ENCODE measurements at regions of chr3 and their contacts with region 1.

Region 1: DNA sequence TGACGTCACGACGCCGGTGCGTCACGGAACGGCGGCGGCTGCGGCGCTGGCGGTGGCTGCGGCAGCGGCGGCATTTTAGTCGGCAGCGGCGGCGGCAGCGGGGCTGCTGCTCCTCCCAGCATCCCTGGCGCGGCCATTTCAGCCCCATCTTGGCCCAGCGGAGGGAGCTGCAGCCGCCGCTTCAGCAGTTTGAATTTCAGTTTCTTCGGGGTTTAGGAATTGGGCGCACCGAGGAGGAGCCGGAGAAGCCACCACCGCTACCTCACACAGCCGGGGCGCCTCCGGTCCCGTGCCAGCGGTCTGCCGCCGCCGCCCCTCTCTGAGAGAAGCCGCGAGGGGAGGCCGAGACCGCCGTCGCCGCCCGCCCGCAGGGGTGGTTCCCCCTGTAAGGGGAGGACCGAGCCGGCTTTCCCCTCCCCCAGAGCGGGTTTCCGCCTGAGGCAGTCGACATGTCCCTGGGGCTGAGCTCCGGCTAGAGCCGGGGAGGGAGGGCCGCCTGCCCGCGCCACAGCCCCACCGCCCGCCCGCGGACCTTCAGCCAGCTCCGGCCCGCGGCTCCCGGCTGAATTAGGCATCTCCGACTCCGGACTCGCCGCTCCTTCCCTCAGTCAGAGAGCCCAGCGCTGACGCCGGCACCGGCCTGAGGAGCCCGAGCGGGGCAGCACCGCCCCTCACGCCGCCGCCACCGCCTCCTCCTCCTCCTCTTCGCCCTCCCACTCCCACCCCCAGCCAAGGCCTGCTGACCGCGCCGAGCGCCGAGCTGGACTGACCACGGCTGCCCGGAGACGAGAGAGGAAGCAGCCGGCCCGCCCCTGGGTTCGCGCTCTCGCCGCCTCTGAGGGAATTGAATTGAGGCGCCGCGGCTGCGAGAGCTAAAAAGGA is at the start of gene TSC22D2:
- DNase-seq: peak; percentile 96
- H3K4me3 Mint-ChIP-seq: peak within 1 kb of the TSS; percentile 77
- H3K27ac Mint-ChIP-seq: peak within 1 kb of the TSS; percentile 99
- H3K4me1 Mint-ChIP-seq: peaks cover 23% of the 10 kb centered on the region
- H3K27me3 Mint-ChIP-seq: no peaks in the 10 kb centered on the region
- total RNA-seq, gene TSC22D2: 13.0 to 13.7 TPM

Region 2: GRCh38 chr3:150227839-150228238 is 180.6 kb before region 1 on chr3:
- CTCF ChIA-PET with region 1: interaction called, 3 read pairs
- intact Hi-C with region 1: loop called (anchors 1 kb)
- DNase-seq: peak; percentile 72
- H3K4me3 Mint-ChIP-seq: no peak overlapping the region
- H3K27ac Mint-ChIP-seq: no peak overlapping the region
- H3K4me1 Mint-ChIP-seq: no peaks in the 10 kb centered on the region
- H3K27me3 Mint-ChIP-seq: peaks cover 12% of the 10 kb centered on the region

Region 3: DNA sequence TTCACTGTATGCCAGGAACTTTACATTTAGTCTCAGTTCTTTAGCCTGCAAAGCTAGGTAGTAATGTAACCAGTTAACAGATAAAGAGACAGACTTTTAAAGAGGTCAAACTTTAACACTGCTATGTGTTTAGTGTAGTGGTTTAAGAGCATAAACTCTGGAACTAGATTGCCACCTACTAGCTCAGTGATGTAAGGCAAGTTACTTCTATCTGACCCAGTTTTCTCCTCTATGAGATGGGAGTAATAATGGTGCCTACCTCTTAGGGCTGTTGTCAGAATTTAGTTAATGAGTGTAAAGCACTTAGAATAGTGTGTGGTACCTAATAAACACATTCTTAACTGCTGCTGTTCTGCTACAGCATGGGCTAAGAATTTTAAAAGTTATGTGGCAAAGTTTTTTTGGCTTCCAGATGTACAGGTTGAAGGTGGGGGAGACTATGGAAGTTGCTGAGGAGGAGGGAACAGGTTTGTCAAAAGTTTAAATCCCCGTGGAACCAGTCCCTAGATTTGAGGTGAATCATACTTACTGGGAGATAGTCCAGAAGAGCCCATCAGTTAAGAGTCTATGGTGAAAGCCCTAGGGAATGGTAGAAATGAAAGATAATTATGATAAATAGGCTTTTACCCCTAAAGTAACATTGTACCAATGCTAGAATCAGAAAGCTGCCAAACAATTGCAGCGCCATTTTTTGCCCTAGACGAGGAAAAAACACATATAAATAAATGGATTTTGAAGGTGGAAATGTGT is 13.5 kb after region 1 on chr3:
- CTCF ChIA-PET with region 1: no interaction called
- intact Hi-C with region 1: loop called (anchors 1 kb)
- DNase-seq: no peak
- H3K4me3 Mint-ChIP-seq: no peak overlapping the region
- H3K27ac Mint-ChIP-seq: no peak overlapping the region
- H3K4me1 Mint-ChIP-seq: peaks cover 45% of the 10 kb centered on the region
- H3K27me3 Mint-ChIP-seq: no peaks in the 10 kb centered on the region

Region 4: DNA sequence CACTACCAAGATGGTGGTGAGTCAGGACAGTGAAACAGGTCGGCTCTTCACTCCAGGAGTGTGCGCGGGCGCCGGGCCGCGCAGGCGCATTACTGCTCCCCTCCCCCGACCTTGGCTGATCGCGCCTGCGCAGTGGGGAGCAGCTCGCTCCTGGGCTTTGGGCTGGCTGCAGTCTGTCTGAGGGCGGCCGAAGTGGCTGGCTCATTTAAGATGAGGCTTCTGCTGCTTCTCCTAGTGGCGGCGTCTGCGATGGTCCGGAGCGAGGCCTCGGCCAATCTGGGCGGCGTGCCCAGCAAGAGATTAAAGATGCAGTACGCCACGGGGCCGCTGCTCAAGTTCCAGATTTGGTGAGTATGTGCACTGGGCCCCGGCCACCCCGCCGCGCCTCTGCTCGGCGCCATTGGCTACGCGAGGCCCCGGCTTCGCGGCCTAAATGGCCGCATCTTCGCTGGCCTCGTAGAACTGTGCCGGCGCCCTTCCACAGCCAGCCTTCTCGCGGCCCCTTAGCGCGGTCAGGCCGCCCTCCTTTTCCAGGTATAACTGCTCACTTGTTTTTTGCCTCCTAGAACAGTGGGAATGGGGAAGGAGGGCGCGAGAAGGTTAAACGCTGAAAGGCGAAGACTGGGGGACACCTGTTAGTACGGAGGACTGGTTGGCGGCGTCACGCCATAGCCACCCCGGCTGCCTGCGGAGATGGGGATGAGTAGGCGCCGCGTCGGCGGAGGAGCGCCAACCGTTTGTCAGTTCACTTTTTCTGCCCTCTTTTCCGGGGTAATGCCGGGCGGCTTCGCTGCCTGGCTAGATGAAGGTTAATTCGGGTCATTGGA is 194.9 kb after region 1 on chr3 and contains the start of gene SELENOT:
- CTCF ChIA-PET with region 1: no interaction called
- intact Hi-C with region 1: loop called (anchors 1 kb)
- DNase-seq: peak; percentile 93
- H3K4me3 Mint-ChIP-seq: peak within 1 kb of the TSS; percentile 96
- H3K27ac Mint-ChIP-seq: peak within 1 kb of the TSS; percentile 97
- H3K4me1 Mint-ChIP-seq: peaks cover 59% of the 10 kb centered on the region
- H3K27me3 Mint-ChIP-seq: no peaks in the 10 kb centered on the region
- total RNA-seq, gene SELENOT: 68.4 to 71.2 TPM

Region 5: DNA sequence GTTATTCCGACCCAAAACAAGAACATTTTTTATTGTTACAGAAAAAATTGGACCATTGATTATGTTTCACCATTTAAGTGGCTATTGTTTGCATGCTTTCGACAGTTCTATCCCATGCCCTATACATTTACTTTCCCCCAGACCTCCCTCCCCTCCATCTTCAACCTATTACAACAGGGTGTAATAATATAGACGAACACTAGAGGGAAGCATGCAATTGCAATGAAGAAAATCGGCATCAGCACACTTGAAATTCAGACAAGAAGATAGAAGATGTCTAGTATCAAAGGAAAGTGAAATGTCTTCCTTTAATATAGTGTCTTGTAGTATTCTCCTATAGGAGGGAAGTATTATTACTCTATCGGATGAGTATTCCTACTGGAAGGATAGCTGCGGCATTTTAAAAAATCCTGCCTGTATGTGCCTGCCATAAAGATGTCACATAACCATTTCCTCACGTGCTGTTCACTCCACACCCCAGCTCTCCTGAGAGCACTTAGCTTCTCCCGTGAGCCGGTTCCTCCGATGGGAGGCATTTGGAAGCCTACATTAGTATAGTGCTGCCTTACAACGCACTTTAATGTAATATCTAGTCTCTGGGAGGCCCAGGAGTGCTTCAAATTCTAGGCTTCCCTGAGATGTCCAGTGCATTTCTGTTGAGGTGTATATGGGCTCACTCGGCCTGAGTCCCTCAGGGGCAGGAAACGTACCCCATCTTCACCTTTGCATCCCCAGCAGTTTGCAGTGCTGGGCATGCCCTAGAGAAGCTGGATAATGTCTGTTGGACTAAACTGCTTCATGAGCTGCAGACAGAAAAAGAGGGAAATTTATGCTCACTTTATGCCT is 313.0 kb after region 1 on chr3:
- CTCF ChIA-PET with region 1: no interaction called
- intact Hi-C with region 1: no loop called
- DNase-seq: no peak
- H3K4me3 Mint-ChIP-seq: no peak overlapping the region
- H3K27ac Mint-ChIP-seq: no peak overlapping the region
- H3K4me1 Mint-ChIP-seq: peaks cover 28% of the 10 kb centered on the region
- H3K27me3 Mint-ChIP-seq: no peaks in the 10 kb centered on the region

Region 6: DNA sequence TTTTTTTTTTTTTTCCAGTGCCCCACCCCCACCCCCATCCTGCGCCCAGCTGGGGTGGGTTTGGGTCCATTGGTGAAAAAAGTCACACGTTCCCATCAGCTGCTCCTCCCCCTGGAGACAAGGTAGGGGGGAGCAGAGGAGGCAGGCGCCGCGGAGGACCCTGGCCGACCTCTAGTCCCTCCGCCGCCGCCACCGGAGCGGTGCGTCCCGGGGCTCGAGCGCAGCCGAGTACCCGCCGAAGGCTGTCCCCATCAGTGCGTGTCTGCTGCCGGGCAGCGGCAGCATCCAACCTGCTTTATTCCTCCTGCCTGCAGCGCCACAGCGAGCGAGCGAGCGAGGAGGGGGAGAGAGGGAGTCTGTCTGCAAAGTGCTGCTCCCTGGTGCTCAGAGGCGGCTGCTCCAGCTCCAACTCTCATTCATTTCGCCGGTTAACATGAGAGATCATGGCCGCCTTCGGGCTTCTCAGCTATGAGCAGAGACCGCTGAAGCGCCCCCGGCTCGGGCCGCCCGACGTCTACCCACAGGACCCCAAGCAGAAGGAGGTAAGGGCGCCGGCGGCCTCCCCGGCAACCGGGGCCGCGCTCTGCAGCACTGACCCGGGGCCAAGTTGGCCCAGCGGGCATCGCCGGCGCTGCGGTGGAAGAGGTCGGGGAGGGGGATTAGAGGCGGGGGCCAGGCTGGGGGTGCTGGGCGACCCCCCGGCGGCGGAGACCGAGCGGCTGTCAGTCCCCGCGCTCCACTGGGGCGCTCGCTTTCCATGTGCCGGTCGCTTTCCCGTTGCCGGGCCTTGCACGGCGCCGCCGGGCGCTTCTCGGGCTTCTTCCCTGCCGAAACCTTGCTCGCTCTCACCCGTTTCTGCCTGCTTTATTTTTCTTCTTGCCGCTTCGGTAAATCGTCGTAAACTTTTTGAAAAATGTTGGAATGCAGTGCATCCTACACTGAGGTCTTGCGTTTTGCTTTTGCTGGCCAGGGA is 678.3 kb after region 1 on chr3:
- CTCF ChIA-PET with region 1: no interaction called
- intact Hi-C with region 1: loop called (anchors 1 kb)
- DNase-seq: peak; percentile 87
- H3K4me3 Mint-ChIP-seq: peak overlapping the region; percentile 82
- H3K27ac Mint-ChIP-seq: no peak overlapping the region
- H3K4me1 Mint-ChIP-seq: peaks cover 9% of the 10 kb centered on the region
- H3K27me3 Mint-ChIP-seq: peaks cover 46% of the 10 kb centered on the region

Measured in activated naive CD4-positive, alpha-beta T cell treated with anti-CD3 and anti-CD28 coated beads for 36 hours (primary cell).